ENCODE measurements at regions of chr10 and their contacts with region 1.

Region 1: GRCh38 chr10:6401562-6402348 is 178.3 kb downstream of the PRKCQ start:
- DNase-seq: peak; percentile 74 to 82 (median 78)
- H3K4me3 ChIP-seq: peak overlapping the region in 5 of 7 experiments; percentile 7 to 70 (median 46)
- H3K27ac ChIP-seq: no peak overlapping the region
- H3K4me1 ChIP-seq: peaks cover 19 to 35% (median 30%) of the 10 kb centered on the region in 4 experiments
- H3K27me3 ChIP-seq: peaks cover 0 to 2% (median 0%) of the 10 kb centered on the region in 5 experiments

Region 2: DNA sequence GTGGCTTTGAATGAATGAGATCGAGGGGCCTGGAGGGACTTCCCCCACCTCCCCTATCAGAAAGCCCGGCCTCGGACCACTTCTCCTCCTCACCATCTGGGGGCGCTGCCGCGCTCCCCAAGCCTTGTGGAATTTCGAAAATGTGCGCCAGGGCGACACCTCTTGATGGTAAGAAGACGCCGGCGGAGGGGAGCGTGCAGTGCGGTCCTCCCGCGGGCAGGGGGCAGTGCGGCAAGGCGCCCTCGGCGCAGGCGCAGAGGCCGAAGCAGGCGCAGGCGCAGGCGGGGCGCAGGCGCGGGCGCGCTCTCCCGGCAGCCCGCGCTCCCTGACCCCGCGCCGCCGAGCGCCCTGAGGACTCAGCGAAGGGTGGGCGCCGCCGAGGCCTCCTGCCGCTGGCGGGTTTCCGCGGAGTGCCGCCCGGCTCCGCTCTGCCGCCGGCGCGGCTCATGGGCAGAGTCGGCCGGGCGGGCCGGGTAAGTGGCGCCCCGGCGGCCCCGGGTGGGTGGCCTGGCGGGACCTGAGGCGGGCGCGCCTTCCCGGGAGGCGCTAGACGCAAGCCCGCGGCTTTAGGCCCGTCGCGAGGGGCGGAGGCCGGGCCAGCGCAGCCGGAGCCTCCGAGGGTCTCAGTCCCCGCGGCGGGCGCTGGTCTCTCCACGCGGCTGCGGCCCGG is 312.9 kb before region 1 on chr10 and contains the start of gene RBM17:
- CTCF ChIA-PET with region 1: interaction called, 37 read pairs
- POLR2A ChIA-PET with region 1: no interaction called
- DNase-seq: peak; percentile 95 to 99 (median 98)
- H3K4me3 ChIP-seq: peak within 1 kb of the TSS; percentile 79 to 94 (median 87)
- H3K27ac ChIP-seq: peak within 1 kb of the TSS; percentile 74 to 87
- H3K4me1 ChIP-seq: peaks cover 23 to 57% (median 49%) of the 10 kb centered on the region in 4 experiments
- H3K27me3 ChIP-seq: no peaks in the 10 kb centered on the region

Region 3: DNA sequence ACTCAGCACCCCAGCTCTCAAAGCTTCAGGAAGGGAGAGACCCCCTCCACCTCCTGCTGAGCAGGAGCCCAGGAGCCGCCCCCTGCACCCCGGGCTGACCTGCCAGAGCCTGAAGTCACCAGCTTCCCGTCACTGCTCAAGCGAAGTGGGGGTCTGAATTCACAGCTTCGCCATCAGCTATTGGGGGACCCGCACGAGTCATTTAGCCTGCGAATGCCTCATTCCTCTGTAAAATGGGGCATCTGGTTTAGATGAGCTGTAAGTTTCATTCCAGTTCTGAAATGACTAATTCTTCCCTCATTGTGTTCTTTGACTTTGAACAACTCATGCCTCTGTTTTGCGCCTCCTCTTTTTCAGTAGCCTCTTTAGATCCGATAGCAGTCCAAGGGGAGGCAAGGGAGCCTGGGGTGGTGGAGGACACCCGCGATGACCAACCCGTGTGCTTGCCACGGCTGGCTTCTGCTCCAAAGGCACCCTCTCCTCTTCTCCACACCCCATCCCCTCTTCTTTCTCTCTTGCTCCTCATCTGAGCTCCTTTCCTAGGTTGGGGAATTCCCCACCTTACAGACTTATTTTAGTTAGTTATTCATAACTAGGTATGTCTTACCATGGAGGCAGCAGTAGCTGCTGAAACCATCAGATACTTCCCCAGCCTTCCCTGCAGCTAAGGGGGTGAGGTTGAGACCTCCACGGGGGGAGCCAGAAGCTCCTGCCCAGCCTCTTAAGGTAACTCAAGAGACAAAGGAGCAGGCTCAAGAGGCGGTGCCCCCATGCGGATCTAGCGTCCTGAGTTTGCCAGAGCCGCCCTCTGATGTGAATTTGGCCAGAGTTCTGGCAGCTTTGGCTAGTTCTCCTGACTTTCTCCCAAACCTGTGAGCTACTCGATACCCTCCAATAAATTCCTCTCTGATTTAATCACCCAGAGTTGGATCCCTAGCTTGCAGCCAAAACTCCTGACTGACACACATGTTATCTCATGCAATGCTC is 265.2 kb before region 1 on chr10:
- CTCF ChIA-PET with region 1: interaction called, 12 read pairs
- POLR2A ChIA-PET with region 1: no interaction called
- DNase-seq: no peak
- H3K4me3 ChIP-seq: no peak overlapping the region
- H3K27ac ChIP-seq: no peak overlapping the region
- H3K4me1 ChIP-seq: peaks cover 0 to 25% (median 23%) of the 10 kb centered on the region in 4 experiments
- H3K27me3 ChIP-seq: no peaks in the 10 kb centered on the region

Region 4: DNA sequence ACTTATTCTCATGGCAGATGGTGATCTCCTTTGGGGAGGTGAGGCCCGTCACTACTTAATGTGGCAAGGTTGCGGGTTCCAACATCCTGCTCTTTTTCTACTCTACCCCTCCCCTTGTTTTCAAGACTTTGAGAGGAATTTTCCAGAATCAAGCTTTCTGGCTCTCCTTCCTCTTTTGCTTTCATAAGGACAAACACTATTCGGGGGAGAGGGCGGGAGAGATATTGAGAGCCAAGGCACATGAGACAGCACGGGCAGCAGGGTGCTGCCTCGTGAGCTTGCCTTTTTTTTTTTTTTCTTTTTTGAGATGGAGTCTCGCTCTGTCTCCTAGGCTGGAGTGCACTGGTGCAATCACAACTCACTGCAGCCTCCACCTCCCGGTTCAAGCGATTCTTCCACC is 205.9 kb before region 1 on chr10:
- CTCF ChIA-PET with region 1: interaction called, 92 read pairs
- POLR2A ChIA-PET with region 1: no interaction called
- DNase-seq: peak in 2 of 3 donors; percentile 66 to 69
- H3K4me3 ChIP-seq: no peak overlapping the region
- H3K27ac ChIP-seq: no peak overlapping the region
- H3K4me1 ChIP-seq: peaks cover 0 to 22% (median 18%) of the 10 kb centered on the region in 4 experiments
- H3K27me3 ChIP-seq: no peaks in the 10 kb centered on the region

Region 5: DNA sequence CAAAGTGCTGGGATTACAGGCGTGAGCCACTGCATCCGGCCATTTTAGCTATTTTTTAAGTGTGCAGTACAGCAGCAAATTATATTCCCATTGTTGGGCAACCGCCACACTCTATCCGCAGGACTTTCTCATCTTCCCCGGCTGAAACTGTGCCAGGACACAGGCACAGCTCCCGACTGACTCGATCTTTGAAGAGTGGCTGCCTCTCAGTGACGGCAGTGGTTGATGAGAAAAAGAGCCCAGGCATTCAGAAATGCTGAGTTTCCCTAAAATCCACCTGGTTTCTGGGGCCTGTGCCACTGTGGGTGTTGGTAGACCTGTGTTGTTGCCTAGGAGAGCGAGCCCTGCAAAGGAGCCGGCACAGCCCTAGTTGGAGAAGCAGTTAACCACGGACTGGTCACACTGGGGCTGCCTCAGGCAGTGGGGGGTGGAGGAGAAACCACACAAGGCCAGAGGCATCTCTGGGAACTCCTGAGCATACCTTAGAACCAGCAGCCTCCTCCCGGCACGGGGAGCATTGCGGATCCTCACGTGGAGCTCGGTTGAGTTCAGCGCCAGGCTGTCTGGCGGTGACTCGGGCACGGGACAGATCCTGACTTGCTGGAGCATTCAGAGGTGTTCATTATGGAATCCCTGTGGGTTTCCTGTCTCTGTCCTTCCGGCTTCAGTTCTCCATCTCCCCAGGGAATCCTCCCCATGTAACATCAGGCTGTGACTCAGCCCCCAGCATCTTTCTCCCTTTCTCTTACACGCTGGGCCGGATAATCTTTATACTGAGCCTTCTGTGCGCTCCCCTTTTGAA is 182.9 kb before region 1 on chr10:
- CTCF ChIA-PET with region 1: interaction called, 13 read pairs
- POLR2A ChIA-PET with region 1: interaction called, 4 read pairs
- DNase-seq: no peak
- H3K4me3 ChIP-seq: no peak overlapping the region
- H3K27ac ChIP-seq: no peak overlapping the region
- H3K4me1 ChIP-seq: peaks cover 0 to 13% (median 4%) of the 10 kb centered on the region in 4 experiments
- H3K27me3 ChIP-seq: no peaks in the 10 kb centered on the region

Region 6: DNA sequence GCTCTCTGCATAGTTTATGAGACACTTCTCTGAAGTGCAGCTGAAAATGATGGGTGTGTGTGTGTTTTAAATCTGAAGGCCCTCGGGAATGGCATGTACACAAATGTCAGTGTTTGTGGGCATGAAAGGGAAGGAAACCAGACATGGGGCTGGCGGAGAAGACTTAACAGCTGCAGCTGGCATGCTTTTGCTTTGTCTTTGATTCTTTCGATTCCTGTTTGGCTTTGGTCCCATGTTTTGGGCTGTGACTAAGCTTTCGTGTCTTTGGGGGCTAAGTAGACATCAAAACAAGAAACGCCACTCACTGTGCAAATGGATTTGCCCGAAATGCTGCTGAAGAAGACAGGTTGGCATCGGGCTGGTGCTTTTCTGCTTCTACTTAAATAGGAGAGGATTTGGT is 19.7 kb before region 1 on chr10:
- CTCF ChIA-PET with region 1: interaction called, 19 read pairs
- POLR2A ChIA-PET with region 1: interaction called, 4 read pairs
- DNase-seq: peak; percentile 85 to 98 (median 98)
- H3K4me3 ChIP-seq: peak overlapping the region in 2 of 7 experiments; percentile 20 to 32
- H3K27ac ChIP-seq: no peak overlapping the region
- H3K4me1 ChIP-seq: peaks cover 10 to 21% (median 19%) of the 10 kb centered on the region in 4 experiments
- H3K27me3 ChIP-seq: no peaks in the 10 kb centered on the region